Vagina (tissue), 2 donors: ENCODE measurements at regions of chr9 and their contacts with region 1.

Region 1: GRCh38 chr9:35882263-35882848 is 12.2 kb upstream of the OR13J1 start:
- DNase-seq: no peak
- H3K4me3 ChIP-seq: no peak overlapping the region
- H3K27ac ChIP-seq: no peak overlapping the region
- H3K4me1 ChIP-seq: no peaks in the 10 kb centered on the region
- H3K27me3 ChIP-seq: no peaks in the 10 kb centered on the region
- CTCF ChIP-seq: peak; percentile 94 to 95 (median 94)
- POLR2A ChIP-seq: no peak

Region 2: GRCh38 chr9:35790385-35791296 is 91.7 kb before region 1 on chr9:
- intact Hi-C with region 1: loop called (anchors 5 kb)
- DNase-seq: no peak
- H3K4me3 ChIP-seq: peak overlapping the region; percentile 62 to 63
- H3K27ac ChIP-seq: peak overlapping the region; percentile 81
- H3K4me1 ChIP-seq: peaks cover 48% of the 10 kb centered on the region
- H3K27me3 ChIP-seq: no peaks in the 10 kb centered on the region
- CTCF ChIP-seq: peak; percentile 85 to 96 (median 92)
- POLR2A ChIP-seq: no peak

Region 3: DNA sequence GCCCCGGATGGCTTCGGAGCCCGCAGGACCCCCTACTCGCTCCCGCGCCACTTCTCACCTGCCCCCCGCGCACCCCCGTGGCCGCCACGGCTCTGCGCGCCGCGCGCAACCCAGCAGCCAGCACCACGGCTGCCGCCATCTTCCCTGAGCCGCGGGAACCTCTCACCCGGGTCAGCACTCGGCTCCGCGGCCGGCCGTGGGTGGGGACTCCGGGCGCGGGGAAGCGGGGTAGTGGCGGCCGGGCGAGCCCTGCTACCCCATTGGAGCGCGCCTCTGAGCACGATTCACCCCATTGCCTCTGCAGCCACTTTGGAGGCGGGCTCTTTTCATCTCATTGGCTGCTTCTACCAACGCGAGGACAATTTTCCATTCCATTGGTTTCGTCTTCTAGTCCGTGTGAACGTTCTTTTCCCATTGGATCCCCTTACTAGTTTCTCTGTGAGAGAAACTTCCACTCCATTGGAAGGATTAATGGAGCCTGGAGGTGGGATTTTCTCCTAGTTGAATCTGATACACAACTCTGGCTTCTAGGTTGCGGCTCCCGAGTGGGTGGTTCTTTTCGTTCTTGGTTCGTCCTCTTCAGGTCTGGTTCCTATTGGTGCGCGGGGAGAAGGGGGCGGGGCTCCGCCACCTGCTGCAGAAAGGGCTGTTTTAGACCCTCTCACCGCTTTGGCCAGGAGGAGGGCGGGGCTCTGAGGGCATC is 67.4 kb before region 1 on chr9 and contains the start of gene HINT2:
- intact Hi-C with region 1: no loop called
- DNase-seq: peak in 1 of 2 donors; percentile 99
- H3K4me3 ChIP-seq: peak within 1 kb of the TSS; percentile 86 to 97
- H3K27ac ChIP-seq: peak within 1 kb of the TSS; percentile 95
- H3K4me1 ChIP-seq: peaks cover 24% of the 10 kb centered on the region
- H3K27me3 ChIP-seq: no peaks in the 10 kb centered on the region
- CTCF ChIP-seq: no peak
- POLR2A ChIP-seq: peak; percentile 47 to 87
- total RNA-seq, gene HINT2: 24.1 TPM